CD4-positive, alpha-beta memory T cell (primary cell): ENCODE measurements at regions of chr7 and their contacts with region 1.

Region 1: DNA sequence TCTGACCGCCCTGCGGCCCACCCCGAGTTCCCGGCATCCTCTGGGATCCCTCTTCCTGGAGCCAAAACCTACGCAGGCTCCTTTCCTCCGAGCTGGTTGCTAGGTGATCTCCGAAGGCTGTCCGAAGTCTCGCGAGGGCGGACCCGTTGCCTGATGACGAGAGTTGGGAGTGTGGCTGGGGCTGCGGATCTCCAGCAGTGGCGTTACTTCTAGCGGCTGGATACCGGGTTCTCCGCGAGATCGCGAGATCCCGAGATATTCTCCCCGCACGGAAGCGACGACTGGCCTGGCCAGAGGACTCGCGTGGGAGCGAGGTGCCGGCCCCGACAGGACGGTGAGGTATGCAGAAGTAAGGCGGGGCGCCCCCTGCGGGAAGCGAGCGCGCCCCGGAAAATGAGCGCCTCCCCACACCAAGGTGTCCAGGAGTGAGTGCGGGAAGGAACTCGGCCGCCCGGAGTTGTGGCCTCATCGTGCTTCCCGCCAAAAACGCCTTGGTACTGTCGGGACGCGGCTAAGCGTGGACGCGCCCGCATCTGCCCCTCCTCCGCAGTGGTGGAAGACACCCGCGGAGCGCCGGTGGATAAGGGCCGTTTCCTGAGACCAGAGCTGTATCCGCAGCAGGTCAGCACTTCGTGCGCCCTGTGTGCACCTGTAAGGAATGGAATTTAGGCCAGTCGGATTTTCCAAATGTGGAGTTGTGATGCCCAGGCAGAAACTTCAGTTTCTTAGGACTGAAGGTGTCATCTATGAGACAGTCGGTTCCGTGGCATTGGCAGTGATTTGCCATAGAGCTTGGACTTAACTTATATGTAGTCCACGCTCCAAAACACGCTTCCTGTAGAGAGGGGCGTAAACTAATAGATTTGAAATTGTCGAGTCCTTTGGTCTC is at the start of gene AGBL3:
- DNase-seq: peak; percentile 87 to 91 (median 88)
- H3K4me3 ChIP-seq: peak within 1 kb of the TSS; percentile 60 to 86
- H3K4me3 Mint-ChIP-seq: peak within 1 kb of the TSS; percentile 96 to 99 (median 98)
- H3K27ac ChIP-seq: peak within 1 kb of the TSS; percentile 80
- H3K27ac Mint-ChIP-seq: peak within 1 kb of the TSS; percentile 98 to 100 (median 98)
- H3K4me1 ChIP-seq: peaks cover 20% of the 10 kb centered on the region
- H3K4me1 Mint-ChIP-seq: peaks cover 26 to 41% (median 31%) of the 10 kb centered on the region in 4 donors
- H3K27me3 ChIP-seq: no peaks in the 10 kb centered on the region
- H3K27me3 Mint-ChIP-seq: no peaks in the 10 kb centered on the region
- total RNA-seq, gene AGBL3: 5.5 to 6.2 TPM

Region 2: GRCh38 chr7:135001390-135002165 is 15.0 kb after region 1 on chr7:
- CTCF ChIA-PET with region 1: interaction called, 28 read pairs
- POLR2A ChIA-PET with region 1: interaction called, 4 read pairs
- intact Hi-C with region 1: no loop called
- DNase-seq: no peak
- H3K4me3 ChIP-seq: no peak overlapping the region
- H3K4me3 Mint-ChIP-seq: no peak overlapping the region
- H3K27ac ChIP-seq: no peak overlapping the region
- H3K27ac Mint-ChIP-seq: no peak overlapping the region
- H3K4me1 ChIP-seq: no peaks in the 10 kb centered on the region
- H3K4me1 Mint-ChIP-seq: peaks cover 0 to 2% (median 0%) of the 10 kb centered on the region in 4 donors
- H3K27me3 ChIP-seq: no peaks in the 10 kb centered on the region
- H3K27me3 Mint-ChIP-seq: no peaks in the 10 kb centered on the region

Region 3: GRCh38 chr7:135147899-135148721 is 161.5 kb after region 1 on chr7 and contains the start of gene TMEM140:
- CTCF ChIA-PET with region 1: interaction called, 60 read pairs
- POLR2A ChIA-PET with region 1: interaction called, 77 read pairs
- intact Hi-C with region 1: loop called (anchors 1 kb)
- DNase-seq: peak; percentile 74 to 85 (median 80)
- H3K4me3 ChIP-seq: peak within 1 kb of the TSS; percentile 48 to 67
- H3K4me3 Mint-ChIP-seq: peak within 1 kb of the TSS; percentile 85 to 96 (median 92)
- H3K27ac ChIP-seq: peak within 1 kb of the TSS; percentile 90
- H3K27ac Mint-ChIP-seq: peak within 1 kb of the TSS; percentile 90 to 99 (median 98)
- H3K4me1 ChIP-seq: peaks cover 61% of the 10 kb centered on the region
- H3K4me1 Mint-ChIP-seq: peaks cover 44 to 78% (median 59%) of the 10 kb centered on the region in 4 donors
- H3K27me3 ChIP-seq: no peaks in the 10 kb centered on the region
- H3K27me3 Mint-ChIP-seq: no peaks in the 10 kb centered on the region
- total RNA-seq, gene TMEM140: 28.3 to 31.3 TPM

Region 4: DNA sequence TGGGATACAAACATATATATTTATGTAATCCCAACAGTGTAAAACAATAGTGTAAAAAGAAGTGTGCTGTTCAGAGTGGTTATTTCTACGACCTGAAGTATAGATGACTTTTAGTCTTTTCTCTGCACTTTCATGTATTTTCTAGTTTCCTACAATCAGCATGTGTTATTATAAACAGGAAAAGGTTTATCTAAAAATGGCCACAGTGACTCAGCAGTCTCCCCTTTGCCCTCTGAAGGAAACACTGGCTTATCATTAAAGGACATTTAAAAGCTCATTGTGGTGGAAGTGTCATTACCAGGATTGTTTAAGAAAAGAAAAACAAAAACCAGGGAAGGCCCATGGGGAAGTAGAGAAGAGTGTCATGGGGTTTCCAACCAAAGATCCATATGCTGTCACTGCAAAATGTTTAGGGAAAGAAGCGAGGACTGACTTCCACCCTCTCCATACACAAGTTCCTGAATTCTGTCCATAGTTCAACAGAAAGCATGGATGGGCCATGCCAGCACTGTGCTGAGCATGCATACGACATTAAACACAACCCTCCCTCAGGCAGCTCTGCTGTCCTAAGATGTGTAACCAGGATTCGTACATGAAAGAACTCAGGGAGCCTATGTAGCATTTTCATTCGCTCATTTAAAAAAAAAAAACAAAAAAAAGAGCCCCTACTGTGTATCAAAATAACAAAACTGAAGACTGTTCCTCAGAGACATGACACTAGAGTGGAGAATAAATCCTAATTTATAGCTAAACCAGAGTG is 173.7 kb after region 1 on chr7:
- CTCF ChIA-PET with region 1: interaction called, 162 read pairs
- POLR2A ChIA-PET with region 1: interaction called, 7 read pairs
- intact Hi-C with region 1: no loop called
- DNase-seq: no peak
- H3K4me3 ChIP-seq: no peak overlapping the region
- H3K4me3 Mint-ChIP-seq: peak overlapping the region in 3 of 8 donors; percentile 40 to 76 (median 55)
- H3K27ac ChIP-seq: no peak overlapping the region
- H3K27ac Mint-ChIP-seq: peak overlapping the region; percentile 24 to 85 (median 74)
- H3K4me1 ChIP-seq: peaks cover 39% of the 10 kb centered on the region
- H3K4me1 Mint-ChIP-seq: peaks cover 26 to 69% (median 52%) of the 10 kb centered on the region in 4 donors
- H3K27me3 ChIP-seq: no peaks in the 10 kb centered on the region
- H3K27me3 Mint-ChIP-seq: no peaks in the 10 kb centered on the region

Region 5: DNA sequence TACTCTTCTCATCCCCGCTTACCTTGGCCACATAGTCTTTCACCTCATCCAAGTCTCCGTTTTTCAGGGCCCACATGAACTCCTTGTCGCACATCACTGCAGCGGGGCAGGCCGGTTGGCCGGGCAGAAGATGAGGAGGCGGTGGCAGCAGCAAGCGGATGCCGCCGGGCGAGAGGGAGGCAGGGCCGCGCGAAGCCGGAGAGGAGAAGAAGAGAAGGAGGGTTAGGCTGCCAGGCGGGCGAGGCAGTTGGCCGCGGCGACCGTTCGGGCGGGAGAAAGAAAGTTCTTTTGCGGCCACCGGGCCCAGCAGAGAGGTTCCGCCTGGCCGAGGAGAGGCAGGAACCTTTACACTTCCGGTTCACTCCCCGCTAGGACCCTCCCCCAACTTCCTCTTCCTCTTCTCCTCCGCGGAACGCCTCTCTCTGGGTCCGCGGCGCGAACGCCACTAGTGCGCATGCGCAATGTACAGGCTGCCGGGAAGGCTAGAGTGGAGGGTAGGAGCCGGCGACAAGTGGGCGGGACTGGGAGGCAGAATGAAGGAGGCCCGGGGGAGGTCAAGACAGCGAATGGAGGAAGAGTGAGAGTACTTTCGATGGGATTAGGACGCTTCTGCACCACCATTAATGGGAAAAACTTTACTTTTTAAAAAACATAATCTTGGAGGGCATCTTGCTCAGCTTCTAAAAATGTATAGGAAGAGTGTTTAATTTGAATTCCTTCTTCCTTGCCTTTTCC is 990.6 kb after region 1 on chr7 and contains the start of gene MTPN:
- CTCF ChIA-PET with region 1: no interaction called
- POLR2A ChIA-PET with region 1: no interaction called
- intact Hi-C with region 1: loop called (anchors 1 kb)
- DNase-seq: peak; percentile 95 to 98 (median 97)
- H3K4me3 ChIP-seq: peak within 1 kb of the TSS; percentile 82 to 90
- H3K4me3 Mint-ChIP-seq: peak within 1 kb of the TSS; percentile 89 to 100 (median 96)
- H3K27ac ChIP-seq: peak within 1 kb of the TSS; percentile 93
- H3K27ac Mint-ChIP-seq: peak within 1 kb of the TSS; percentile 89 to 98 (median 95)
- H3K4me1 ChIP-seq: peaks cover 88% of the 10 kb centered on the region
- H3K4me1 Mint-ChIP-seq: peaks cover 59 to 94% (median 76%) of the 10 kb centered on the region in 4 donors
- H3K27me3 ChIP-seq: no peaks in the 10 kb centered on the region
- H3K27me3 Mint-ChIP-seq: no peaks in the 10 kb centered on the region
- total RNA-seq, gene MTPN: 83.1 to 84.5 TPM